ENCODE measurements at regions of chr5 and their contacts with region 1.

Region 1: GRCh38 chr5:59799668-59800346 is 93.7 kb downstream of the PDE4D start:
- DNase-seq: peak; percentile 76
- ATAC-seq: peak; percentile 50
- H3K4me3 ChIP-seq: peak overlapping the region in 3 of 5 experiments; percentile 6 to 54 (median 28)
- H3K4me3 Mint-ChIP-seq: no peak overlapping the region
- H3K27ac ChIP-seq: peak overlapping the region; percentile 55 to 74
- H3K27ac Mint-ChIP-seq: no peak overlapping the region
- H3K4me1 ChIP-seq: peaks cover 26 to 30% of the 10 kb centered on the region in 2 donors
- H3K4me1 Mint-ChIP-seq: peaks cover 14% of the 10 kb centered on the region
- H3K27me3 ChIP-seq: no peaks in the 10 kb centered on the region
- H3K27me3 Mint-ChIP-seq: no peaks in the 10 kb centered on the region
- CTCF ChIP-seq: peak; percentile 94

Region 2: DNA sequence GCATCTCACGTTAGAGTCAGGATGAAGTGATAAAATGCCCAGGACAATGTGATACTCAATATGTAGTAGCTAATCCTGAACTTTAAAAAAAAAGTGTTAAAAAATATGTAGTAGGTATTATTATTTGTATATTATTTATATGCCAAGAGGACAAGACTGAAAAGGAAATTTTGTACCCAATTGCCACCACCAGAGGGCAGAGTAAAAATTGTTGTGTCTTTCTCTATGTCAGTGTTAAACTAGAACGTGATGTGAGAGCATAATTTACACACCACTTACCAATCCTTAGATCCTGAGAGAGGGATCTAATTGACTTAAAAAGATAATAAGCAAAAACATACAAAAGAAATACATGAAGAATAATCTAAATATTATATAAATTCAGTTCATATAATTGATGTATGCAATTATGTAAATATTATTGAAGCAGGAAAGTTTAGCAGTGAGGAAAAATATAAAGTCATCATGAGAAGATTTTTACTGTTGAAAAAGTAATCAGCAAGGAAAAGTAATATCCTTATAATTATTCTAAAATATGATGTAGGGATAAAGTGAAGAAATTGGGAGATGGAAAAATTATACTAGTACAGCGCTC is 928.1 kb before region 1 on chr5:
- CTCF ChIA-PET with region 1: interaction called, 5 read pairs
- POLR2A ChIA-PET with region 1: interaction called, 3 read pairs
- intact Hi-C with region 1: loop called (anchors 1 kb)
- DNase-seq: peak; percentile 42
- ATAC-seq: no peak
- H3K4me3 ChIP-seq: no peak overlapping the region
- H3K4me3 Mint-ChIP-seq: no peak overlapping the region
- H3K27ac ChIP-seq: no peak overlapping the region
- H3K27ac Mint-ChIP-seq: no peak overlapping the region
- H3K4me1 ChIP-seq: no peaks in the 10 kb centered on the region
- H3K4me1 Mint-ChIP-seq: no peaks in the 10 kb centered on the region
- H3K27me3 ChIP-seq: no peaks in the 10 kb centered on the region
- H3K27me3 Mint-ChIP-seq: peaks cover 7% of the 10 kb centered on the region
- CTCF ChIP-seq: peak; percentile 87

Region 3: GRCh38 chr5:59126708-59127573 is 672.9 kb before region 1 on chr5:
- CTCF ChIA-PET with region 1: no interaction called
- POLR2A ChIA-PET with region 1: no interaction called
- intact Hi-C with region 1: loop called (anchors 2 kb)
- DNase-seq: no peak
- ATAC-seq: no peak
- H3K4me3 ChIP-seq: peak overlapping the region; percentile 2 to 56 (median 46)
- H3K4me3 Mint-ChIP-seq: no peak overlapping the region
- H3K27ac ChIP-seq: peak overlapping the region; percentile 37 to 62
- H3K27ac Mint-ChIP-seq: no peak overlapping the region
- H3K4me1 ChIP-seq: peaks cover 8 to 10% of the 10 kb centered on the region in 2 donors
- H3K4me1 Mint-ChIP-seq: peaks cover 9% of the 10 kb centered on the region
- H3K27me3 ChIP-seq: no peaks in the 10 kb centered on the region
- H3K27me3 Mint-ChIP-seq: no peaks in the 10 kb centered on the region
- CTCF ChIP-seq: no peak

Region 4: GRCh38 chr5:59390074-59390659 is 409.6 kb before region 1 on chr5:
- CTCF ChIA-PET with region 1: interaction called, 75 read pairs
- POLR2A ChIA-PET with region 1: interaction called, 3 read pairs
- intact Hi-C with region 1: no loop called
- DNase-seq: peak; percentile 53
- ATAC-seq: no peak
- H3K4me3 ChIP-seq: no peak overlapping the region
- H3K4me3 Mint-ChIP-seq: no peak overlapping the region
- H3K27ac ChIP-seq: no peak overlapping the region
- H3K27ac Mint-ChIP-seq: no peak overlapping the region
- H3K4me1 ChIP-seq: no peaks in the 10 kb centered on the region
- H3K4me1 Mint-ChIP-seq: peaks cover 21% of the 10 kb centered on the region
- H3K27me3 ChIP-seq: no peaks in the 10 kb centered on the region
- H3K27me3 Mint-ChIP-seq: no peaks in the 10 kb centered on the region
- CTCF ChIP-seq: peak; percentile 95

Region 5: GRCh38 chr5:59660737-59661136 is 139.1 kb before region 1 on chr5:
- CTCF ChIA-PET with region 1: interaction called, 12 read pairs
- POLR2A ChIA-PET with region 1: no interaction called
- intact Hi-C with region 1: no loop called
- DNase-seq: peak; percentile 41
- ATAC-seq: peak; percentile 39
- H3K4me3 ChIP-seq: no peak overlapping the region
- H3K4me3 Mint-ChIP-seq: peak overlapping the region; percentile 15
- H3K27ac ChIP-seq: no peak overlapping the region
- H3K27ac Mint-ChIP-seq: no peak overlapping the region
- H3K4me1 ChIP-seq: peaks cover 24 to 36% of the 10 kb centered on the region in 2 donors
- H3K4me1 Mint-ChIP-seq: peaks cover 54% of the 10 kb centered on the region
- H3K27me3 ChIP-seq: no peaks in the 10 kb centered on the region
- H3K27me3 Mint-ChIP-seq: no peaks in the 10 kb centered on the region
- CTCF ChIP-seq: peak; percentile 35

Region 6: GRCh38 chr5:59768152-59769040 is 31.4 kb before region 1 on chr5:
- CTCF ChIA-PET with region 1: interaction called, 9 read pairs
- POLR2A ChIA-PET with region 1: interaction called, 5 read pairs
- intact Hi-C with region 1: loop called (anchors 1 kb)
- DNase-seq: peak; percentile 74
- ATAC-seq: peak; percentile 80
- H3K4me3 ChIP-seq: peak overlapping the region; percentile 55 to 77 (median 70)
- H3K4me3 Mint-ChIP-seq: peak overlapping the region; percentile 90
- H3K27ac ChIP-seq: peak overlapping the region; percentile 41 to 57
- H3K27ac Mint-ChIP-seq: peak overlapping the region; percentile 74
- H3K4me1 ChIP-seq: peaks cover 28 to 37% of the 10 kb centered on the region in 2 donors
- H3K4me1 Mint-ChIP-seq: peaks cover 43% of the 10 kb centered on the region
- H3K27me3 ChIP-seq: peaks cover 0 to 10% (median 5%) of the 10 kb centered on the region in 4 experiments
- H3K27me3 Mint-ChIP-seq: peaks cover 11% of the 10 kb centered on the region
- CTCF ChIP-seq: no peak

Region 7: GRCh38 chr5:59829386-59829785 is 29.6 kb after region 1 on chr5:
- CTCF ChIA-PET with region 1: no interaction called
- POLR2A ChIA-PET with region 1: no interaction called
- intact Hi-C with region 1: no loop called
- DNase-seq: no peak
- ATAC-seq: no peak
- H3K4me3 ChIP-seq: no peak overlapping the region
- H3K4me3 Mint-ChIP-seq: no peak overlapping the region
- H3K27ac ChIP-seq: no peak overlapping the region
- H3K27ac Mint-ChIP-seq: no peak overlapping the region
- H3K4me1 ChIP-seq: no peaks in the 10 kb centered on the region
- H3K4me1 Mint-ChIP-seq: no peaks in the 10 kb centered on the region
- H3K27me3 ChIP-seq: no peaks in the 10 kb centered on the region
- H3K27me3 Mint-ChIP-seq: peaks cover 3% of the 10 kb centered on the region
- CTCF ChIP-seq: no peak

Region 8: DNA sequence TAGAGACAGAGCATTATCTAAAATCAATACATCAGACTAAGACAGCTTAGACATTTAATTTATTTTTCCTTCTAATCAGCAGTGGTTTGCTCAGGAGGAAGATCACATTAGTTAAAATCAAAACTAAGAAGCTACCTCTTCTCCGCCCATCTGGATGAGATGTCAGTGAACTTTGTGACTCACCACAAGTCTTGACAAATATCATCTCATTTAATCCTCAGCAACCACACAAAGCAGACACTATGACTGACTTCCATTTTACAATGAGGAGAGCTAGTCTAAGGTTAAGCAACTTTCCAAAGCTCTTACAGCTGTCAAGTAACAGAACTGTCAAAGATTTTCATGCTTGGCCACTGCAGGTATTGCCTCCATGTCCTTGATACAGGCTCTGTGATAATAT is 610.6 kb after region 1 on chr5:
- CTCF ChIA-PET with region 1: no interaction called
- POLR2A ChIA-PET with region 1: no interaction called
- intact Hi-C with region 1: no loop called
- DNase-seq: no peak
- ATAC-seq: no peak
- H3K4me3 ChIP-seq: no peak overlapping the region
- H3K4me3 Mint-ChIP-seq: no peak overlapping the region
- H3K27ac ChIP-seq: no peak overlapping the region
- H3K27ac Mint-ChIP-seq: no peak overlapping the region
- H3K4me1 ChIP-seq: no peaks in the 10 kb centered on the region
- H3K4me1 Mint-ChIP-seq: no peaks in the 10 kb centered on the region
- H3K27me3 ChIP-seq: no peaks in the 10 kb centered on the region
- H3K27me3 Mint-ChIP-seq: no peaks in the 10 kb centered on the region
- CTCF ChIP-seq: no peak

Measured in B cell (primary cell).